ENCODE measurements at regions of chr4 and their contacts with region 1.

Region 1: GRCh38 chr4:159435561-159436023 is 332.7 kb downstream of the RAPGEF2 start:
- DNase-seq: no peak
- H3K4me3 ChIP-seq: no peak overlapping the region
- H3K27ac ChIP-seq: no peak overlapping the region
- H3K4me1 ChIP-seq: no peaks in the 10 kb centered on the region
- H3K27me3 ChIP-seq: no peaks in the 10 kb centered on the region
- CTCF ChIP-seq: no peak

Region 2: DNA sequence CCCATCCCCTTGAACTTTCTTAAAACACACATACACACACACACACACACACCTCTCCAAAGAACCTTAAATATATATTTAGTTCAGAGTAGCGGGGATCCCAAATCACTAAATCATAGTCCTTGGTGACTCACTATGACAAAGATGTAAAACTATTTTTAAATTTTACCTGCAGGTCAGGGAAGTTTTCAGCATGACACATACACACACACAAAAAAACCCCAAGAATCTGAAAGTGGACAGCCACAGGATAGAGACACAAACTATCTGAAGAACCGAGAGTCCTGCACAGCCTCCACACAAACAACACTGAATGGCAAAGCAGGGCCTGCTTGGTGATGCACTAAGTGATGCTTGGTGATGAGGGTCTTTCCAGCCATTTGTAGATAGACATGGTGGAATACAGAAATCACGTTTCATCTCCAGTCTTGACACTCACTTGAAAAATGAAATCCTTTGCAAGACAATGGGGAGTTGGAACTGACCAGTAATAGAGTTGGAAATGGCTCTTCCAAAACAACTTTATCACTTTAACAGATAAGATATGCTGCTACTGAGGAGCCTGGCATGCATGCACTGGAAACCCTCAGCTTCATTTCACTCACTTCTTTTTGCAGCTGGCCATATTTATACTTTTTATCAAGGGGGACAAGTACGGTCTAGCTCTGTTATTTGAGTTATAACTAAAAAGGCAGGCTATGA is 25.4 kb before region 1 on chr4:
- CTCF ChIA-PET with region 1: no interaction called
- POLR2A ChIA-PET with region 1: no interaction called
- intact Hi-C with region 1: no loop called
- DNase-seq: peak in 1 of 2 experiments; percentile 67
- H3K4me3 ChIP-seq: no peak overlapping the region
- H3K27ac ChIP-seq: peak overlapping the region; percentile 55
- H3K4me1 ChIP-seq: peaks cover 16% of the 10 kb centered on the region
- H3K27me3 ChIP-seq: no peaks in the 10 kb centered on the region
- CTCF ChIP-seq: no peak

Region 3: DNA sequence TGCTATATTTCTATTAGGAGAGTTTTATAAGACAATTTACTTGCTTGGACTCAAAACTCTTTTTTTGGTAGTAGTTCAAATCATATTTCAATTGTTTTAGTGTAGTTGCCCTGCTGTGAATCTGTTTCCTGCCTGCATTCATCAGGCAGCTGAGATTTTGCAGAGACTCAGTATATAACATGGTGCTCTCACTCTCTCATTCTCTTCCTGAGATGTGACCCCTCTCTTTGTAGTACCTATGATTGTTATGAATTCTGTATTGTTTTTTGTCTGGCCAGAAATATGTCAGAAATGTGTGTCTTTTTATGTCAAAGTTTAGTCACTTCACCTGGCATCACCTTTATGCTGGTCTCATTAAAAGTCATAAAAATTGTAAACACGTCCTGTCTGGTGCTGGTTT is 41.3 kb after region 1 on chr4:
- CTCF ChIA-PET with region 1: no interaction called
- POLR2A ChIA-PET with region 1: interaction called, 11 read pairs
- intact Hi-C with region 1: no loop called
- DNase-seq: no peak
- H3K4me3 ChIP-seq: no peak overlapping the region
- H3K27ac ChIP-seq: no peak overlapping the region
- H3K4me1 ChIP-seq: no peaks in the 10 kb centered on the region
- H3K27me3 ChIP-seq: no peaks in the 10 kb centered on the region
- CTCF ChIP-seq: no peak